ENCODE measurements at regions of chr1 and their contacts with region 1.

Region 1: GRCh38 chr1:151254217-151255213 is at the start of gene PSMD4:
- DNase-seq: peak; percentile 99
- H3K4me3 Mint-ChIP-seq: peak within 1 kb of the TSS; percentile 79
- H3K27ac Mint-ChIP-seq: peak within 1 kb of the TSS; percentile 98
- H3K4me1 Mint-ChIP-seq: peaks cover 24% of the 10 kb centered on the region
- H3K27me3 Mint-ChIP-seq: no peaks in the 10 kb centered on the region
- CTCF ChIP-seq: no peak
- total RNA-seq, gene PSMD4: 266 and 285 TPM in 2 replicates

Region 2: DNA sequence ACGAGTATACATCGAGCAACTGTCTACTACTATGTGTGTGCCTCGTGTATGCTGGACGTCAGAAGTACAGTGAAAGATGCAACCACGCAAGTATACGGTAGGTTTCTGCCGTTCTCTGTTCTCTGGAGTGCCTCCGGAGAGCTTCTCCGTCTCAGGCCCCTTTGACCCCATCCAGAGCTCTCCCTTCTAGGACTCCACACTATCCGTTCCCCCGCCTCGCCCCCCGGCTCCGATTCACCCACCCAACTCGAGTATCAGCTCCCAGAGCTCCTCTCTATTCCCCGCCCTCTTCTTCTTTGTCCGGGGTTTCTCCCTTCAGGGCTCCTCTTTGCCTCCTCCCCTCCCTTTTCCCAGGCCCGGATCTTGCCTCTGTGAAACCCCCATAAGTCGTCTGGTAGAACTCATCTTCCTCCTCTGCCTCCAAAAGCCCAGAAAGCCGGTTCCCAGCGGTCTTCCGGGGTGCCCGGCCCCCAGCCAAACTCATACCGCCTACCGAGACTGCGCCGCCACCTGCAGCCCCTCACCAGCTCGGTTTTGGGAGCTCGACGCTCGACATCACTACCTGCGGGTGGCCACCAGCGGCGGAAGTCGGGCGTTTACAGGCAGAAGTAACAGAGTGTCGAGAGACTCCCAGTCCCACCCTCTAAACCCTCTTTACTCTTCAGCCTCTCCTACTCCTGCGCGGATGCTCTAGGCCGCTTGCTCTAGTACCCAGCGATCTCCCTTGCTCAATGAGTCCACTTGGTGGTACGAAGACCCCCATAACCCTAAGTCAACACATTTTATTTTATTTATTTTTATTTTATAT is 64.7 kb before region 1 on chr1 and contains the start of gene VPS72:
- CTCF ChIA-PET with region 1: interaction called, 70 read pairs
- POLR2A ChIA-PET with region 1: interaction called, 153 read pairs
- intact Hi-C with region 1: no loop called
- DNase-seq: peak; percentile 93
- H3K4me3 Mint-ChIP-seq: peak within 1 kb of the TSS; percentile 83
- H3K27ac Mint-ChIP-seq: peak within 1 kb of the TSS; percentile 90
- H3K4me1 Mint-ChIP-seq: peaks cover 33% of the 10 kb centered on the region
- H3K27me3 Mint-ChIP-seq: no peaks in the 10 kb centered on the region
- CTCF ChIP-seq: no peak
- total RNA-seq, gene VPS72: 106 and 108 TPM in 2 replicates

Region 3: DNA sequence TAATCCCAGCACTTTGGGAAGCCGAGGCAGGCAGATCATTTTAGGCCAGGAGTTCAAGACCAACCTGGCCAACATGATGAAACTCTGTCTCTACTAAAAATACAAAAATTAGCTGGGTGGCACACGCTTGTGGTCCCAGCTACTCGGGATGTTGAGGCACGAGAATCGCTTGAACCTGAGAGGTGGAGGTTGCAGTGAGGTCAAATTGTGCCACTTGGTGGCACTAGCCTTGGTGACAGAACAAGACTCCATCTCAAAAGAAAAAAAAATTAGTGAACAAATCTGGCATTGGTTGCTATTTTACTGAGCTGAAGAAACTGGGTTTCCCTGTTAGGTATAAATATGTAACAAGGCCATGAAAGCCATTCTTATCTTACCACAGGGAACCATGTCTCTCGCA is 26.9 kb before region 1 on chr1:
- CTCF ChIA-PET with region 1: interaction called, 122 read pairs
- POLR2A ChIA-PET with region 1: interaction called, 13 read pairs
- intact Hi-C with region 1: no loop called
- DNase-seq: no peak
- H3K4me3 Mint-ChIP-seq: no peak overlapping the region
- H3K27ac Mint-ChIP-seq: no peak overlapping the region
- H3K4me1 Mint-ChIP-seq: peaks cover 6% of the 10 kb centered on the region
- H3K27me3 Mint-ChIP-seq: no peaks in the 10 kb centered on the region
- CTCF ChIP-seq: no peak

Region 4: GRCh38 chr1:151243683-151244216 is 10.8 kb before region 1 on chr1:
- CTCF ChIA-PET with region 1: interaction called, 24 read pairs
- POLR2A ChIA-PET with region 1: interaction called, 11 read pairs
- intact Hi-C with region 1: no loop called
- DNase-seq: no peak
- H3K4me3 Mint-ChIP-seq: no peak overlapping the region
- H3K27ac Mint-ChIP-seq: peak overlapping the region; percentile 17
- H3K4me1 Mint-ChIP-seq: no peaks in the 10 kb centered on the region
- H3K27me3 Mint-ChIP-seq: no peaks in the 10 kb centered on the region
- CTCF ChIP-seq: no peak

Region 5: GRCh38 chr1:151281969-151282882 is 27.7 kb after region 1 on chr1 and contains the start of gene ZNF687:
- CTCF ChIA-PET with region 1: interaction called, 5 read pairs
- POLR2A ChIA-PET with region 1: interaction called, 38 read pairs
- intact Hi-C with region 1: loop called (anchors 2 kb)
- DNase-seq: peak; percentile 100
- H3K4me3 Mint-ChIP-seq: peak within 1 kb of the TSS; percentile 97
- H3K27ac Mint-ChIP-seq: peak within 1 kb of the TSS; percentile 99
- H3K4me1 Mint-ChIP-seq: peaks cover 19% of the 10 kb centered on the region
- H3K27me3 Mint-ChIP-seq: peaks cover 9% of the 10 kb centered on the region
- CTCF ChIP-seq: no peak
- total RNA-seq, gene ZNF687: 26.3 and 27.5 TPM in 2 replicates

Region 6: GRCh38 chr1:151340870-151341754 is 86.6 kb after region 1 on chr1:
- CTCF ChIA-PET with region 1: interaction called, 22 read pairs
- POLR2A ChIA-PET with region 1: interaction called, 3 read pairs
- intact Hi-C with region 1: loop called (anchors 1 kb)
- DNase-seq: peak; percentile 94
- H3K4me3 Mint-ChIP-seq: no peak overlapping the region
- H3K27ac Mint-ChIP-seq: no peak overlapping the region
- H3K4me1 Mint-ChIP-seq: peaks cover 11% of the 10 kb centered on the region
- H3K27me3 Mint-ChIP-seq: no peaks in the 10 kb centered on the region
- CTCF ChIP-seq: peak; percentile 74

Region 7: GRCh38 chr1:151399890-151400495 is 145.5 kb after region 1 on chr1:
- CTCF ChIA-PET with region 1: interaction called, 5 read pairs
- POLR2A ChIA-PET with region 1: interaction called, 12 read pairs
- intact Hi-C with region 1: no loop called
- DNase-seq: peak; percentile 27
- H3K4me3 Mint-ChIP-seq: peak overlapping the region; percentile 93
- H3K27ac Mint-ChIP-seq: peak overlapping the region; percentile 99
- H3K4me1 Mint-ChIP-seq: peaks cover 20% of the 10 kb centered on the region
- H3K27me3 Mint-ChIP-seq: no peaks in the 10 kb centered on the region
- CTCF ChIP-seq: no peak

Measured in MCF 10A (cell line).